ENCODE measurements at regions of chr14 and their contacts with region 1.

Region 1: DNA sequence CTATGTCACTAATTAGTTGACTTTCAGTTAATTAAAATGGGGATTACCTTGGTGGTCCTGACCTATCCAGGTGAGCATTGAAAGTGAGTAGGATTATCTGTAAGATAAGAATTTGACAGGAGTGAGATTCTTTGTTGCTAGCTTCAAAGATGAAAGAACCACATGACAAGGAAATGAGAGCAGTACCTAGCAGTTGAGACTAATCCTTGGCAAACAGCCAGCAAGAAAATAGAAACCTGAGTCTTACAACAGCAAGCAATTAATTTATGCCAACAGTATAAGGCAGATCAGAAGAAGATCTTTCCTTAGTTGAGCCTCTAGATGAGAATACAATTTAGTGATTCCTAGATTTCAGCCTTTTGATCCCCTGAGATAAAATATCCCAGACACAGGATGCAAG is 1058.4 kb downstream of the LRFN5 start:
- DNase-seq: no peak
- H3K4me3 Mint-ChIP-seq: no peak overlapping the region
- H3K27ac Mint-ChIP-seq: no peak overlapping the region
- H3K4me1 Mint-ChIP-seq: no peaks in the 10 kb centered on the region
- H3K27me3 Mint-ChIP-seq: no peaks in the 10 kb centered on the region

Region 2: DNA sequence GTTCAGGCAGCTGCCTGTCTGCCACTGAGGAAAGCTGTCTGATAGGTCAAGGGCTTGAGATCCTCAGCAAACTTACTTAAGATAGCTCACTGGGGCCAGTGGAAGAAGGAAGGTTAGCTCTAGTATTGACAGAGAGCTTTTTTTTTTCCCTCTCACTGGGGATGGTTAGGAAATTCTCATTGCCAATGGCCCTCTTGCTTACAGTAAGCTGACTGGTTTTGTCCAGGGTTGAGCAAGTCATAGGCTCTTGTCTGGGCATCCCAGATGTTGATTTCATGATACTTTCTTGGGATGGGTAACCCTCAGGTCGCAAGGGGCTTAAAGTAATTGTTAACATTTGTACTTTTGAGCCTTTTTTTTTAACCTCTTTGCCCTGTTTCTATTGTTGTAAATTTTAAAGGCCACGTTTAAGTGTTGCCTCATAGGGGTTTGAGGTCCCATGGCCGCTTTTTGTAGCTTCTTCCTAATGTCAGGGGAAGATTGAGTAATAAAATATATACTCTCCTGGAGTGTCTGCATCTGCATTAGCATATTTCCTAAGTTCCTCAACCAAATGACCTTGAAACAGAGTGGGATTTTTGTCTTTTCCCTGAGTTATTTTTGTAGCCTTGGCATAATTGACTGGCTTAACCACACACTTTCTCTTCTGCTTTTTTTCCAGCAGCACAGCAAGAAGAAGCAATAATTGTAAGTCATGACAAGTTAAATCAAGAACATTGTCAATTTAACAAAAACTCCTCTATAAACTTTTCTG is 342.4 kb before region 1 on chr14:
- CTCF ChIA-PET with region 1: no interaction called
- POLR2A ChIA-PET with region 1: no interaction called
- intact Hi-C with region 1: no loop called
- DNase-seq: no peak
- H3K4me3 Mint-ChIP-seq: no peak overlapping the region
- H3K27ac Mint-ChIP-seq: no peak overlapping the region
- H3K4me1 Mint-ChIP-seq: no peaks in the 10 kb centered on the region
- H3K27me3 Mint-ChIP-seq: no peaks in the 10 kb centered on the region

Region 3: DNA sequence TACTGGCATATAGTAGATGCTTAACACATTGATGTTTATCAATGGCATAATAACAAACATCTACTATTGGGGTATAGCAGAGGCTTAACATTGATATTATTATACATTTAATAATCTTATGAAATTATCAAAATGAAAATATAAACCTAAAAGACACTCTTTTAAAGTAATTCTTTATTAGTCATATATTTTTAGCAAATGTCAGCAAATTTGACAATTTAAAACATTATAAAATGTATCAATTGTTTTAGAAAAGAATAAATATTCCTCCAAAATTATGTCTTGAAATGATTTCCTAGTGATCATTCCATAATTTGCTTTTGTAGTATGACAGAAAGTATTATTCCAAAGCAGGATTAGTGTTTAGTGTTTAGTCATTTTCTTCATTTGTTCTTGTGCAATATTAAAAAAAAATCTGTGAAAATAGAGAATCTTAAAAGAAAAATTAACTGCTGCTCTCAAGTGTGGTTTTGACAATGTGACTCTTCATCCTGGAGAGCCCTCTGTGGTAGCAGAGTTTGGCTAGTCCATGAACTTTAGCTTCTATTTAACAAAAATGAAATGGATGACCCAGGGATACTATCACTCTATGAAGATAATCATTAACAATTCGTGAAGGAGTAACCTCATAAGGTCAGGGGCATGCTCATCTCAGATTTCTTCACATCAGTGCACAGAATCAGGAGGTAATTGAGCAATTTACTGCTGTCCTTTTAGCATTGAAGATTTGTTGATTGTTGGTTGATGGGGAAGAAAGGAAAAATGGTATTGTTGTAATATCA is 39.9 kb before region 1 on chr14:
- CTCF ChIA-PET with region 1: no interaction called
- POLR2A ChIA-PET with region 1: no interaction called
- intact Hi-C with region 1: loop called (anchors 1 kb)
- DNase-seq: no peak
- H3K4me3 Mint-ChIP-seq: no peak overlapping the region
- H3K27ac Mint-ChIP-seq: no peak overlapping the region
- H3K4me1 Mint-ChIP-seq: no peaks in the 10 kb centered on the region
- H3K27me3 Mint-ChIP-seq: no peaks in the 10 kb centered on the region

Region 4: GRCh38 chr14:42750769-42751316 is 85.8 kb after region 1 on chr14:
- CTCF ChIA-PET with region 1: no interaction called
- POLR2A ChIA-PET with region 1: no interaction called
- intact Hi-C with region 1: no loop called
- DNase-seq: no peak
- H3K4me3 Mint-ChIP-seq: no peak overlapping the region
- H3K27ac Mint-ChIP-seq: no peak overlapping the region
- H3K4me1 Mint-ChIP-seq: no peaks in the 10 kb centered on the region
- H3K27me3 Mint-ChIP-seq: no peaks in the 10 kb centered on the region

Measured in activated CD4-positive, alpha-beta memory T cell treated with anti-CD3 and anti-CD28 coated beads for 36 hours (primary cell).